Heart right ventricle (tissue), 16 donors: ENCODE measurements at regions of chr2 and their contacts with region 1.

Region 1: DNA sequence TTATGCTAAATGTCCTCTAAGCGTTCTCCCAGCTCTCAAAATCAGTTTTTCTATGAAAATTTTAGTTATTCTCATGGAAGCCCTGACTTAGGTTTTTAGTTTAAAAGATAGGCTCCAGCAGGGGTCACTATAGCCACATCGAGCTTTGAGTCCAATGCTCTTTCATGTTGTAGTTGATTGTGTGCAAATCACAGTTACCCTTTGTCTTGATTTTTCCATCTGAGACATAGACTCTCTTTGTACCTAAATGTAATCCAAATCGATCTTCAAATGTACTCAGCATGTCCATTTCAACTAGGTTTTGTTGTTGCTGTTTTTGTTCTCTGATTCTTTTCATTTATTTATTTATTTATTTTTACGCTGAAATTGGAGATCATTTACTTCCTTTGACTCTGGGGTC is 26.4 kb upstream of the MSTN start:
- DNase-seq: peak in 1 of 2 donors; percentile 48
- ATAC-seq: peak in 7 of 8 donors; percentile 51 to 79 (median 68)
- H3K4me3 ChIP-seq: no peak overlapping the region
- H3K27ac ChIP-seq: no peak overlapping the region
- H3K4me1 ChIP-seq: peaks cover 0 to 3% (median 0%) of the 10 kb centered on the region in 9 donors
- H3K27me3 ChIP-seq: no peaks in the 10 kb centered on the region
- CTCF ChIP-seq: peak; percentile 47 to 87 (median 76)

Region 2: DNA sequence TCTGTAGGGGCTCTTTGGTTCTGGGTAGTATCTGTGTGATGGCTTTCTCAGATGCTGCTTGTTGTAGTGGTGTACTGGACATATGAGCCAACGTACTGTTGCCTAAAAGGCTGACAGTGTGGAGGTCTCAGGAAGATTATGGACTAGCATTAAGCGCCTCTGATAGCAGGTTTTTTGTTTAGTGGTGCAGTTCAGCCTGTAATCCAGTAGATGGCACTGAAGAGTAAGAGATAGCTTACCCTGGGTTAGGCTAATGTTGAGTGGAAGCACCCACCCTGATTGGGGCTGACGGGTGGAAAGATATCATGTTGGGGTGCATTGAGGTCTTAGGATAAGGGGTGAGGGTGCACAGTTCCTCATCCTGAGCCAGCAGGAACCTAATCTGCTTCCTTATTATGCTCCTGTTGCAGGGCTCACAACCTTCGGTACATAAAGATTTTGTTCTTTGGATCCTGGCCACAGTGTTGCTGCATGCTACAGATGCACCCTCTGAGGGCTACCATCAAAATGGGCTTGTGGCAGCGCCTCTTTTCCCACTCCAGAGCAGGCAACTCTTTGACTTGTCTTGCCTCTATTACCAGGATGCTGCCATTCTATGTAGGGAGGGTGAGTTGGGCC is 106.0 kb before region 1 on chr2:
- intact Hi-C with region 1: no loop called
- DNase-seq: no peak
- ATAC-seq: no peak
- H3K4me3 ChIP-seq: no peak overlapping the region
- H3K27ac ChIP-seq: no peak overlapping the region
- H3K4me1 ChIP-seq: no peaks in the 10 kb centered on the region
- H3K27me3 ChIP-seq: no peaks in the 10 kb centered on the region
- CTCF ChIP-seq: peak in 1 of 9 donors; percentile 37

Region 3: DNA sequence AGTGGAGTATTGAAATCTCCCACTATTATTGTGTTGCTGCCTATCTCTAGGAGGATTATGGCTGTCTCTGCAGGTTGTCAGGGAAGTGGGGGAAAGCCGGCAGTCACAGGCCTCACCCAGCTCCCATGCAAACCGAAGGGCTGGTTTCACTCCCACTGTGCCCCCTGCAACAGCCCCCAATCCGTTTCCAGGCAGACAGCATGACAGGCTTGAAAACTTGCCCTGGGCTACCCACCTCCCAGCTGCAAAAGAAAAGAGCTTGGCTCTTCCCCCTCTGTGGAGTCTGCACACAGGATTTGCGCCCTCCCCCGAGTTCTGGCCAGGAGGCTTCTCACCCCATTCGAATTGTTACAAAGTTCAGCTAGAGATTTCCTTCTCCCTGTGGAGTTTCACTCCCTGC is 61.0 kb after region 1 on chr2:
- intact Hi-C with region 1: no loop called
- DNase-seq: no peak
- ATAC-seq: no peak
- H3K4me3 ChIP-seq: no peak overlapping the region
- H3K27ac ChIP-seq: no peak overlapping the region
- H3K4me1 ChIP-seq: no peaks in the 10 kb centered on the region
- H3K27me3 ChIP-seq: no peaks in the 10 kb centered on the region
- CTCF ChIP-seq: no peak

Region 4: DNA sequence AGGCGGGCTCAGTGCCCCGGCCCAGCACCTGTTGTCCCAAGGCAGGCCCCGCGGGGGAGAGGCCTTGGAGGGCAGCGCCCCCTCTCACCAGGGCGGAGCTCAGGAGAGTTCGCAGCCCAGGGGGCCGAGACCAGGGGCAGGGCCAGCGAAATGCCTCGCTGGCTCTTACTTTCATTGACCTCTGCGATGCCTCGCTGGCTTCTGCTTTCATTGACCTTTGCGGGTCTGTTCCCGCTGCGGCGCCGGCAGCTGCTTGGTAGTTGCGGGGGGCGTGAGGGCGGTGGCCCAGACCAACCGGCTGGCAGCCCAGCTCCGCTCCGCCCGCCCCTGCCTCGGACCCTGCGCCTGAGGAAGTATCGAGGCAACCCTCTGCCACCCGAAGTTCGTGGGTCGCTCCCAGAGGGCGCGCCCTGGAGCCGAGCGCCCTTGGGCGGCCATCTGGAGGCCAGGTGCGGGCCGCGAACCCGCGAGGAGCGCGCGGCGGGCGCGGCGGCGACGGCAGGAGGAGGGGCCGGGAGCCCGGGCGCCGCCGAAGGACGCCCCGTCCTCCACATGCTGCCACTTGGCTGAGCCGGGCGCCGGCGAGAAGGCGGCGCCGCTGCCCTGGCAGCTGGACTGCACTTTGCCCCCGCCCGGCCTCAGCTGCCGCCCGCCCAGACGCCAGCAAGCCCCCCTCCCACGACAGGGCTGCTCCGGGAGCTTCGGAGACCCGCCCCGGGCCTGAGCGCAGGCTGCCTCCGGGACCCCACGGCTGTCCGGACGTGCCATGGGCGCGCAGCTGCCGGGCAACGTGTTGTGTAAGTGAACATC is 91.6 kb after region 1 on chr2:
- intact Hi-C with region 1: loop called in 5 of 10 experiments (anchors 2 to 10 kb)
- DNase-seq: peak; percentile 54 to 71
- ATAC-seq: peak; percentile 86 to 97 (median 90)
- H3K4me3 ChIP-seq: peak overlapping the region; percentile 42 to 77 (median 66)
- H3K27ac ChIP-seq: peak overlapping the region; percentile 85 to 97 (median 94)
- H3K4me1 ChIP-seq: peaks cover 0 to 49% (median 15%) of the 10 kb centered on the region in 9 donors
- H3K27me3 ChIP-seq: peaks cover 0 to 16% (median 0%) of the 10 kb centered on the region in 7 donors
- CTCF ChIP-seq: peak in 8 of 9 donors; percentile 9 to 74 (median 56)

Region 5: GRCh38 chr2:190365499-190366204 is 276.7 kb after region 1 on chr2:
- intact Hi-C with region 1: loop called in 7 of 10 experiments (anchors 5 to 10 kb)
- DNase-seq: no peak
- ATAC-seq: no peak
- H3K4me3 ChIP-seq: no peak overlapping the region
- H3K27ac ChIP-seq: no peak overlapping the region
- H3K4me1 ChIP-seq: peaks cover 0 to 4% (median under 1%) of the 10 kb centered on the region in 9 donors
- H3K27me3 ChIP-seq: no peaks in the 10 kb centered on the region
- CTCF ChIP-seq: no peak

Region 6: GRCh38 chr2:190382851-190383250 is 293.9 kb after region 1 on chr2:
- intact Hi-C with region 1: loop called in 2 of 10 experiments (anchors 10 kb)
- DNase-seq: peak in 1 of 2 donors; percentile 26
- ATAC-seq: peak in 5 of 8 donors; percentile 50 to 76 (median 67)
- H3K4me3 ChIP-seq: no peak overlapping the region
- H3K27ac ChIP-seq: no peak overlapping the region
- H3K4me1 ChIP-seq: peaks cover 0 to 11% (median 0%) of the 10 kb centered on the region in 9 donors
- H3K27me3 ChIP-seq: no peaks in the 10 kb centered on the region
- CTCF ChIP-seq: peak; percentile 34 to 73 (median 58)

Region 7: DNA sequence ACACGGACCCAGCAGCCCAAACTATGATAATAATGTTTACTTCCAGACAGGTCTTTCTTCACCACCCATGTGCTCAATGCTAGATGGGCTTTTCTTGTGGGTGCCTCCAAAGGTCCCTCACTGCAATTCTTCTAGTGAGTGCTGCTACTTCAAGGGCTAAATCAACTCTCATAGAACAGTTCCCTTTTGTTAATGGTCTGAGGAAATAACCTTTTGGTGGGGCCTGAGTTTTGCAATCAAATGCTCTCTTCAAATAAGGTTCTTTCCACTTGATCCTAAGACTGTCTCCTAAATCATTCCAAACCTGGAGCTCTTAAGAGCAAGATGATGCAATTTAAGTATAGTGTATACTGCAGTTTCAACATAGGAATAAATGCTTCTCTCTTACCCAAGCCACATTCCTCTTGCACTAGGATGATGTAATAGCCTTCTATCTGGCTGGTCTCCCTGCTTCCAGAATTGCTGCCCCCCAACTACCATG is 439.6 kb after region 1 on chr2:
- intact Hi-C with region 1: loop called in 1 of 10 experiments (anchors 10 kb)
- DNase-seq: no peak
- ATAC-seq: peak in 1 of 8 donors; percentile 32
- H3K4me3 ChIP-seq: no peak overlapping the region
- H3K27ac ChIP-seq: no peak overlapping the region
- H3K4me1 ChIP-seq: peaks cover 0 to 52% (median 32%) of the 10 kb centered on the region in 9 donors
- H3K27me3 ChIP-seq: no peaks in the 10 kb centered on the region
- CTCF ChIP-seq: no peak

Region 8: GRCh38 chr2:190812506-190813294 is 723.8 kb after region 1 on chr2:
- intact Hi-C with region 1: loop called in 2 of 10 experiments (anchors 5 to 10 kb)
- DNase-seq: no peak
- ATAC-seq: no peak
- H3K4me3 ChIP-seq: no peak overlapping the region
- H3K27ac ChIP-seq: no peak overlapping the region
- H3K4me1 ChIP-seq: no peaks in the 10 kb centered on the region
- H3K27me3 ChIP-seq: no peaks in the 10 kb centered on the region
- CTCF ChIP-seq: no peak

Region 9: DNA sequence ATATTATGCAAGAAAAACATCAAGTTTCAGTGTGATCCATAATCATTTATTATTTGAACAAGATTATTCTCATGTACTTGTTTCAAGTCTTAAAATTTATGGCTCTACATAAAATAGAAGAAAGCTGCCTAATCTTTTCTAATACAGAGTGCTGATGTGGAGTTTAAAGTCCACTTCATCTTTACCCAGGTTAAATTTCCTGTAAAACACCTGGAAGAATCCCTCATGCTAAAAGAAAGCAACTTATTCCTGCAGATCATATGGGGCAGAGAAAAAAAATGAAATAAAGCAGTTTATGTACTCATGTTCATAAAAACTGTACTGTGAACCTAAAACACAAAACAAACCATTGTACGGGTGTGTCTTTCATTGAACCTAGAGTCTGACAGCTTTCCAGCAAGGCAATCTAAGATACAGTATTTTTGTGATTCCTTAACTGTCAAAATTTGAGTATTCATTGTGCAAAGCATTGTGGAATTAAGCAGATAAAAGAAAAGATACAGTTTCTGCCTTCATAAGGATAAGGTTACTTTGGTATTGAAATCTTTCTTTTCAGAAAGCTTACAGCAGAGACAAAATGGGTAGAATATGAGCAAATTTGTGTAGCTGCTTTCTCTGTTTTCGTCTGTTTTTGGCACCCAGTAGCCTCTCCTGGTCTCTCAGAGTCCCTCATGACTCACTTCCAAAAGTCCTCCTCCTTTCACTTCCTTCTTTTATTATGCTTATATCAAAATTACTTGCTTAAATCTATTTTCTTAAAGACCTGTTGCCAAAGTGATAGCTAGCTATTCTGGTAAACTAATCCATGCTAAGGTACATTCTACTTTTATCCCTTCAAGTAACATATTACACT is 764.8 kb after region 1 on chr2:
- intact Hi-C with region 1: no loop called
- DNase-seq: no peak
- ATAC-seq: peak in 1 of 8 donors; percentile 38
- H3K4me3 ChIP-seq: no peak overlapping the region
- H3K27ac ChIP-seq: peak overlapping the region in 2 of 10 donors; percentile 1 to 36
- H3K4me1 ChIP-seq: peaks cover 0 to 15% (median 2%) of the 10 kb centered on the region in 9 donors
- H3K27me3 ChIP-seq: no peaks in the 10 kb centered on the region
- CTCF ChIP-seq: no peak